Endothelial cell of umbilical vein (primary cell): ENCODE measurements at regions of chr3 and their contacts with region 1.

Region 1: DNA sequence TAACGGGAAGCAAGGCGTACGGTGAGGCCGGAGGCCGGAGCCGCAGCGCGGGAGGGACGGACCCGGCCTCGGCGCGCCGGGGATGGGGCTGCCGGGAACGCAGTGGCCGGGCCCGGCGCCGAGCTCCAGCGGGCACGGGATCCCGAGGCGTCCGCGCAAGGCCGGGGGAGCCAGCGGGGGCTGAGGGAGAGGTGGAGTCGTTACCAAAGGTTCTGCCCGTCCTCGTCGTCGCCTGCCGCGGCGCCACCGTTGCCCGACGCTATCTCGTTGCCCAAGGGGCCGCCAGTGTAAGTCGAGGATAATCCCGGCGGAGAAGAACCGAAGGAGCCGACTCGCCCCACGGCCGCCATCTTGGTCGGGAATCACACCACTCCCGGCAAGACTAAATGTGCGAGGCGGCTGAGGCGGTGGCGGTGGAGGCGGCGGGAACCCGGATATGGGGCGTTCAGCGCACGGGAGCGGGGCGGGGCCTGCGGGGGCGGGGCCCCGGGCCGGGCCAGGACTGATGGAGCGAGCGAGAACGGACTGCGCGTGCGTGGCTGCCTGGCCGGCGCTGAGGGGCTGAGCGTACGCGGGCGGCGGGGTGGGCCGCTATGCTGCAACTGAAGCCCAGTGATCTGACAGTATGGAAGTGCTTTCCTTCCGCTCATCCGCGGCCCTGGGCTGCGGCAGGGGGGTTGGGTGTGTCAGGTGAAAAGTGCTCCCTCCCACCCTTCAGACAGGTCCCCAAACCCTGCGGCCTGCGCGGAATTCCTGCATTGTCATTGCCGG is at the start of gene DYNC1LI1:
- DNase-seq: peak; percentile 95
- H3K4me3 ChIP-seq: peak within 1 kb of the TSS; percentile 81 to 99 (median 91)
- H3K27ac ChIP-seq: peak within 1 kb of the TSS; percentile 93
- H3K4me1 ChIP-seq: peaks cover 19% of the 10 kb centered on the region
- H3K27me3 ChIP-seq: no peaks in the 10 kb centered on the region
- CTCF ChIP-seq: no peak
- POLR2A ChIP-seq: peak; percentile 95
- total RNA-seq, gene DYNC1LI1: 45.6 and 47.6 TPM in 2 replicates

Region 2: DNA sequence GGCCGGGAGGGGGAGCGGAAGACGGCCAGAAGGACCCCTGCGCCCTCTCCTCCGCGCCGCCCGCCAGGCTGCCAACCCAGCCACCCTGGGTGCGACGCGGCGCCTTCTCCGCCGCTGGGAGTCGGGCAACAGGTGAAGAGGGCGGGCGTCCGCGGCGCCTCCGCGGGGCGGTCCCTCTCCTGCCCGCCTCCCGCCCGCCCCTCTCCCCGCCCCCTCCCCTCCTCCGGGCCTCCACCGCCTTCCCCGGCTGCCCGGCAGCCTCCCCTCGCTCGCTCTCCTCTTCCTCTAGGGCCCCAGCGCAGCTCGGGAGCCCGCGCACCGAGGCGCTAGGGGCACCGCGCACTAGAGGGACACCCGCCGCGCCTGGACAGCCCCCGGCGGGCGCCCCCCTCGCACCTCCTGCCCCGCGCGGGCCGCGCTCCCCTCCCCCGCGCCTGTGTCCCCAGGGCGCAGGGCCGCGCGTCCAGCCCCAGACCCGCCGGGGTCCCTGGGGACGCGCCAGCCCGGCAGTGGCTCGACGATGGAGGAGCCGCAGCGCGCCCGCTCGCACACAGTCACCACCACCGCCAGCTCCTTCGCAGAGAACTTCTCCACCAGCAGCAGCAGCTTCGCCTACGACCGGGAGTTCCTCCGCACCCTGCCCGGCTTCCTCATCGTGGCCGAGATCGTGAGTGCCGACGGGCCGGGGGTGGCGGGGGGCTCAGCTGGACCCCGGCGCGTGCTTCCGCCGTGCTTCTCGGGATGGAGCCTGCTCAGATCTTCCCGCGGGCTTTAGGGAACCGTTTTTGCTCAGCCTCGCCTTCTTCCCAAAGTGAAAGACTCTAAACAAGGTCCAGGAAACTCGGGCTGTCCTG is 331.9 kb before region 1 on chr3 and contains the start of gene CMTM8:
- CTCF ChIA-PET with region 1: no interaction called
- POLR2A ChIA-PET with region 1: no interaction called
- dilution Hi-C with region 1: no loop called
- intact Hi-C with region 1: loop called (anchors 2 kb)
- DNase-seq: peak; percentile 51
- H3K4me3 ChIP-seq: peak within 1 kb of the TSS; percentile 67 to 78 (median 70)
- H3K27ac ChIP-seq: no peak within 1 kb of the TSS
- H3K4me1 ChIP-seq: peaks cover 15% of the 10 kb centered on the region
- H3K27me3 ChIP-seq: no peaks in the 10 kb centered on the region
- CTCF ChIP-seq: no peak
- POLR2A ChIP-seq: no peak
- total RNA-seq, gene CMTM8: 7.3 and 8.1 TPM in 2 replicates

Region 3: GRCh38 chr3:32374788-32375595 is 195.6 kb before region 1 on chr3:
- CTCF ChIA-PET with region 1: no interaction called
- POLR2A ChIA-PET with region 1: no interaction called
- dilution Hi-C with region 1: no loop called
- intact Hi-C with region 1: loop called (anchors 5 kb)
- DNase-seq: peak; percentile 80
- H3K4me3 ChIP-seq: no peak overlapping the region
- H3K27ac ChIP-seq: no peak overlapping the region
- H3K4me1 ChIP-seq: peaks cover 9% of the 10 kb centered on the region
- H3K27me3 ChIP-seq: no peaks in the 10 kb centered on the region
- CTCF ChIP-seq: peak; percentile 41 to 48
- POLR2A ChIP-seq: no peak

Region 4: DNA sequence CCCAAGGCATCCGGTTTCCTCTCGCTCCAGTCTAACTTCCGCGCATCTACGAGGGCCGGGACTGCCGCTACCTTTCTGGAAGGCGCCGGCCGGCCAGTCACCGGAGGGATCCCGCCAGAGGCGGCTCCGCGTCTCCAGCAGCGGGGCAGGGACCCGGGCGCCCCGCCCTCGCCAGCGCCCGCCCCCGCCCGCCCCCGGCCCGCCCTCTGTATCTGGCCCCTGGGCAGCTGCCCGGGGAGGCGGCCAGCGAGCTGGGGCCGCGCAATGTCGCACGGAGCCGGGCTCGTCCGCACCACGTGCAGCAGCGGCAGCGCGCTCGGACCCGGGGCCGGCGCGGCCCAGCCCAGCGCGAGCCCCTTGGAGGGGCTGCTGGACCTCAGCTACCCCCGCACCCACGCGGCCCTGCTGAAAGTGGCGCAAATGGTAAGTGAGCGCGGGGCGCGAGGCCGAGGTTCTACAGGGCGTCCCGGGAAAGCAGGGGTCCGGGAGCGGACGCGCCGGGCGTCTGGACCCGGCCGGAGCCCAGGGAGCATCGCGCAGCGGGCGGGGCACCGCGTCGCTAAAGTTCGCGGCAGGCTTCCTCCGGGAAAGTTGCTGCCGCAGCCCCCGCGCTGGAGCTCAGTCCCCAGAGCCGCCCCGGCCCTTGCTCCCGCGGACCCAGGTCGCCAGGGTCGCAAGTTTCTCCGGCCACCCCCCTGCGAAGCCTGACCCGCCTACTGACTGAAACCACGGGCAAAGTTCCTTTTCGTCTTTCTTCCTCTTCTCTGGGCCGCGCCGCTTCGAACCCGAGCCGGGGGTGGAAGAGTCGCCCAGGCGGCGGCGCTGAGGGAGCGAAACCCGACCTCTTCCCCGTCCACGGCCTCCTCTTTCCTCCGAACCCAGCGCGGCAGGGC is 178.7 kb before region 1 on chr3 and contains the start of gene CMTM7:
- CTCF ChIA-PET with region 1: no interaction called
- POLR2A ChIA-PET with region 1: no interaction called
- dilution Hi-C with region 1: no loop called
- intact Hi-C with region 1: loop called (anchors 5 kb)
- DNase-seq: peak; percentile 65
- H3K4me3 ChIP-seq: peak within 1 kb of the TSS; percentile 67 to 94 (median 82)
- H3K27ac ChIP-seq: peak within 1 kb of the TSS; percentile 77
- H3K4me1 ChIP-seq: peaks cover 14% of the 10 kb centered on the region
- H3K27me3 ChIP-seq: no peaks in the 10 kb centered on the region
- CTCF ChIP-seq: no peak
- POLR2A ChIP-seq: peak; percentile 93
- total RNA-seq, gene CMTM7: 44.7 and 47.1 TPM in 2 replicates

Region 5: GRCh38 chr3:32502118-32502945 is 68.3 kb before region 1 on chr3 and contains the start of gene CMTM6:
- CTCF ChIA-PET with region 1: interaction called, 4 read pairs
- POLR2A ChIA-PET with region 1: no interaction called
- dilution Hi-C with region 1: no loop called
- intact Hi-C with region 1: loop called (anchors 2 kb)
- DNase-seq: peak; percentile 78
- H3K4me3 ChIP-seq: peak within 1 kb of the TSS; percentile 72 to 89 (median 81)
- H3K27ac ChIP-seq: peak within 1 kb of the TSS; percentile 87
- H3K4me1 ChIP-seq: peaks cover 19% of the 10 kb centered on the region
- H3K27me3 ChIP-seq: no peaks in the 10 kb centered on the region
- CTCF ChIP-seq: no peak
- POLR2A ChIP-seq: peak; percentile 78
- total RNA-seq, gene CMTM6: 54.0 and 56.3 TPM in 2 replicates

Region 6: DNA sequence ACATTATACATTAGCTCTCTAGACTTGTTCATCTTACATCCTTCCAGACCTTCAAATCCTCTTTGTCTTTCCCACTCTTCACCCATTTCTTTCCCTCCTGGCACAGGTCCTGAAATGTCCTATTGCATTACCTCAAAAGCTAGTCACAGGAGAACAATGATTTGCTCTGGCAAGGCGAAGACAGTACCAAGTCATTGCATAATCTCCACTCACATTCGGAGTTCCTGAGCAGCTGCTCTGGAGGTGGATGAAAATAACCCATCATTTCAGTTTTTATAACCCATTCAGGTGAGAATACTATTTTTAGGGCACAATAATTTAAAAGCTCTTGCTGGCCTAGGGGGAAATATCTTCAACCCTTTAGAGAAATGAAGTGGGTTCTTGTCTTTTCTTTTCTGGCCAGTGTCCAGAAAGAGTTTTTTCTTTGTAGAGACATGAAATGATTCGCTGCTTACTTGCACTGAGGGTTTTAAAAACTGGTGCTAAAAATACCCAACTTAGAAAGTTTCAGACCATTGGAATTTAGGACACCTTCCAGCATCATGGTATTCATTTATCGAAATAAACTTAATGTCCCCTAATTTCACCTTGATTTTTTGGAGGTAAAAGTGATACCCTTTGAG is 23.4 kb after region 1 on chr3:
- CTCF ChIA-PET with region 1: no interaction called
- POLR2A ChIA-PET with region 1: no interaction called
- dilution Hi-C with region 1: no loop called
- intact Hi-C with region 1: no loop called
- DNase-seq: no peak
- H3K4me3 ChIP-seq: no peak overlapping the region
- H3K27ac ChIP-seq: no peak overlapping the region
- H3K4me1 ChIP-seq: no peaks in the 10 kb centered on the region
- H3K27me3 ChIP-seq: peaks cover 15 to 40% of the 10 kb centered on the region in 2 experiments
- CTCF ChIP-seq: no peak
- POLR2A ChIP-seq: no peak

Region 7: DNA sequence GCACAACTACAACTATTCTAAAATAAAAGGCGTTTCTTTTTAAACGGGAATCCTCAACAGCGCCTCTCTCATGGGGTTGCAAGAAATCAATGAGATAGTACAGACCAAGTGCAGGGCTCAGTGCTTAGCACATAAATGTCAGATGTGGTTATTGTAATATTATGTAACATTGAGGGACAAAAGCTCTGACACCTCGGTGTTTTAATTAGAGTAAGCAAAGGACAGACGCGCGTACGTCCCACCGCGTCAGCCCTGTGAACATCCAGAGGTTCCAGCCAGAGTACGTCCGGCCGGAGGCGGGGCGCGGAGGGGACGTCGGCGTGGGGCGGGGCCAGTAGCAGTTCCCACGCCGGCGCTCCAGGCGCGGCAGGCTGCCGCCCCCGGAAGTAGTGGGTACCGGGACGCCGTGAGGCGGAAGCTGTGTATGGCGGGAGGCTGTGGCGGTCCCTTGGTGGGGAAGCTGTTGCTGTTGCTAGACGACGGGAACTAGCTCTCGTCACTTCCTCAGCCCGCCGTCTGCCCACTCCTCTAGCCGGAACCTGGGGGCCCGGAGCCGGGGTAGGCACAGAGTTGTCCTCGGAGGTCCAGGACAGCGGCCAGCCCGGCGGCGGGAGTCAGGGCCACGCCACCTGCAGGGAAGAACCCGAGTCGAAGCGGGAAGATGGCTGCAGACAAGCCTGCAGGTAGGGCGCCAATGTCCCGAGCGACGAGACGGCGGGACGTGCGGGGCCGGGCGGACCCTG is 114.4 kb after region 1 on chr3 and contains the start of gene CNOT10:
- CTCF ChIA-PET with region 1: no interaction called
- POLR2A ChIA-PET with region 1: no interaction called
- dilution Hi-C with region 1: no loop called
- intact Hi-C with region 1: loop called (anchors 1 kb)
- DNase-seq: peak; percentile 95
- H3K4me3 ChIP-seq: peak within 1 kb of the TSS; percentile 63 to 89 (median 87)
- H3K27ac ChIP-seq: peak within 1 kb of the TSS; percentile 84
- H3K4me1 ChIP-seq: peaks cover 19% of the 10 kb centered on the region
- H3K27me3 ChIP-seq: no peaks in the 10 kb centered on the region
- CTCF ChIP-seq: no peak
- POLR2A ChIP-seq: peak; percentile 41
- total RNA-seq, gene CNOT10: 28.6 and 34.2 TPM in 2 replicates